ENCODE measurements at regions of chr11 and their contacts with region 1.

Region 1: DNA sequence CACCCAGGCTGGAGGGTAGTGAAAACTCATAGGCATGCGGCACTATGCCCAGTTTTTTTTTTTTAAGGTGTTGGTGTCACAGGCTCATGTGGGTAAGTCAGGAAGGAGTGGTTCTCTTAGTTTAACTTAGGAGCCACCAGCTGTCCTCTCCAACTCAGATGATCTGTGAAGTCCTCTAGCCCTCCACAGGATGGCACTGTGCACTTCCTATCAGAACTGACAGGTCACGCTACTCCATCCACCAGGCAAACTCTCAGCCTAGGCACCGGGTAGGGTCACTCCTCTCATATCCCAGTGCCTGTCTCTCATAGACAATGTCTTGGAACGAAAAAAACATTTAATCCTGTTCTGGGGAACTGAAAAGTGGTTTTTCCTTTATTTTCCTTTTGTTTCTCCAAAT is 16.5 kb downstream of the NAP1L4 start:
- DNase-seq: no peak
- ATAC-seq: peak; percentile 46

Region 2: DNA sequence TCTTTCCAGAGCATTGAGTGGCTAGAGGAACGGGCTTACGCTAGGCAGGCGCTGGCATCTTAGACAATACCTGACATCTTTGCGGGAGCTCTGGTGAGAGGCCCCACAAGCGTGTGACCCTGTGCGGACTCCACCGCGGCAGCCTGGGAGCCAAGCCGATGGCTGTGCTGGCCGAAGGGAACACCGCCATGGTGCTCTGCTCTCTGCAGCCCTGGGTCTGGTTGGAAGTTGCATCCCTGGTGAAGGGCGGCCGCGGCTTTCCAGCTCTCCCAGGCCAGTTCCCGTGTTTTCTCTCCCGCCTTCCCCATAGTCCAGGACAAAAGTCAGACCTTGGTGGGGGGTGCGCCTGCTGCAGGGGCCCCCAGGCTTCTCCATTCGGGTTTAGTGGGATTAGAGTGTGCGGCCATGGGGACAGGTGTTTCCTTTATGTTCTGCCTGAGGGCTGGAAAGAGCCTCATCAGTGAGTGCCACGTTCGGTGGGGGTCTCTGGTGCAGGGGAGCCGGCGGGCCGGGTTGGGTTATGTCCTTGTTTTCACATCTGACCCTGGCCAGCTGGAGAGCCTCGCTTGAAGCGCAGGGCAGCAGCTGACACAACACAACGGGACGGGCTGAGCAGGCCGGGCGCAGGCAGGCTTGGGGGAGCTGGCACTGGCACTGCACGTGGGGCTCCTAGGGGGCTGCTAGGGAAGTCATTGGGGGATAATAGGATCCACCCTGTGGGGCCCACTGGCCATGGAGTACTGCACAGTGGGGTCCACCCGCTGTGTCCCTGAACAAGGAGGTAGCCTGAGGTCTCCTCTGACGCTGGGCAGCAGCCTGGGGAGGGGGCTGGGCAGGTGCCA is 436.0 kb before region 1 on chr11:
- intact Hi-C with region 1: loop called (anchors 5 kb)
- DNase-seq: peak; percentile 51
- ATAC-seq: no peak

Region 3: DNA sequence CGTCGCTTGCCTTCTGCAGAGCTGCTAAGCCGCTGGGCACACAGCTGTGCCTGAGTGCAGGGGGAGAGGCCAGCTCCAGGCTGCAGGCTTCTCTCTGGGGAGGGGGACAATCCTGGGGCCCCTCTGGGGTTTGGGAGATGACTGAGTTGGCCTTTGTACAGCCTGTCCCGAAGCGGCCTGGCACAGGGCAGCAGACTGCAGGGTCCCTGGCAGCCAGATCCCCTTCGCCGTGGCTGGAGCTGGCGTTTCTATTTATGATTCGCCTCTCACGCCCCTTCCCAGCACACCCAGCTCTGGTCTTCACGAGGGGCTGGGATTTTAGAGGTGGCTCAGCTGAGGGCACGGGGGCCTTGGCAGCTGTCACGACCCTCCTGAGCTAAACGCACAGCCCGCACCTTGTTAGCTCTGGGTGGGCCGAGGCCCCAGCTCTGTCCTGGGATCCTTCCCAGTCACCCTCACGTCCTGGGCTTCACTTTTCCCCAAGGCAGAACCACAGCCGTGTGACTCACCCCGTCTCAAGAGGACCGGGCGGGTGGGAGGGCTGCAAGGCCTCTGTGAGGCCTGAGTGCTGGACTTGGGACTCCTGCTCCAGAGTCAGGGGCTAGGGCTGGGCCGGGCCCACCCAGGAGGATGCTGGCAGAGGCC is 171.1 kb after region 1 on chr11:
- intact Hi-C with region 1: no loop called
- DNase-seq: no peak
- ATAC-seq: peak; percentile 43